AG04449 (cell line): ENCODE measurements at regions of chr20 and their contacts with region 1.

Region 1: GRCh38 chr20:60050158-60050947 is 92.1 kb downstream of the CDH26 start:
- DNase-seq: no peak
- H3K4me3 ChIP-seq: no peak overlapping the region
- CTCF ChIP-seq: no peak

Region 2: DNA sequence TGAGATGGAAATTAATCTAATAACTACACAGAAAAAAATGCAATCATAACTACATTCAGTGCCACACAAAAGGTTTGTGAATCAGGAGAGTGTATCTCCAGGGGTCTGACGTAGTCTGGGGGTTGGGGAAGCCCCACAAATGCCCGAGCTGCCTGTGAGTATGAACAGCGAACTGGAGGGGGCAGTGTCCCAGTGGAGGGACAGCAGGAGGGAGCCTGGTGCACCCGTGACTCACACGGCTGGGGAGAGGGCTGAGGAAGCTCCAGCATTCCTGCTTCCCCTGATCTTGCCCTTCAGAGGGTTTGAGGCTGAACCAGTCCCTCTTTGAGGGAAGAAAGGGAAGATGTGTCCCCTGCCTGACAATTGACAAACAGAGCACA is 13.2 kb before region 1 on chr20:
- CTCF ChIA-PET with region 1: interaction called, 11 read pairs
- POLR2A ChIA-PET with region 1: no interaction called
- DNase-seq: no peak
- H3K4me3 ChIP-seq: no peak overlapping the region
- CTCF ChIP-seq: peak; percentile 66

Region 3: DNA sequence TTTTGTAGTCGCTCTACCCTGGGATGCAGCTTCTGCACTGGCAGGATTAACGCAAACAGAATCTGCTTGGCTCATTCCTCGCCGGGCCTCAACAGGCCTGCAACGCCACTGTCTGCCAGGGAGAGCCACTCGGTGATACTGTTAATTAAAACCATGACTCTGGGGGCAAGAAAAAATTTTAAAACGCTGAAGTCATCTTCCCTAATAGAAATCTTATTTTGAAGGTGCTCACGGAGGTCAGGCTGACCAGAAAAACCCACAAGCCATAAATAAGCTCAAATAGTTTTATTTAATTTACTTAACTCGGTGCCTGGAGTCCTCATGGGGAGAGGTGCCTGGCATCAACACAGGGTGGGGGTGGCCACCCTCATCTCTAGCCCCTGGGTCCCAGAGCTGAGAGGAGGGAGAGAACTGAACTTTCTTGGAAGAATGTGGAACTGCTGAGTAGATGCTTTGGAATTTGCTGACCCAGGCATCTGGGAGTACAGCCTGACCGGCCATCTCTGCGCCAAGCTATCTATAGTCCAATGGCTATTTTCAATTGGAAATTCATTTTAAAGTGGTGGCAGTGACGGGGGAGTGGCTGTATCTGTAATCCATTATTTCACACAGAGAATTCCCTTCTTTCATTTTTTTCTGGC is 12.6 kb after region 1 on chr20:
- CTCF ChIA-PET with region 1: interaction called, 61 read pairs
- POLR2A ChIA-PET with region 1: interaction called, 4 read pairs
- DNase-seq: peak; percentile 76
- H3K4me3 ChIP-seq: peak overlapping the region; percentile 34
- CTCF ChIP-seq: no peak

Region 4: DNA sequence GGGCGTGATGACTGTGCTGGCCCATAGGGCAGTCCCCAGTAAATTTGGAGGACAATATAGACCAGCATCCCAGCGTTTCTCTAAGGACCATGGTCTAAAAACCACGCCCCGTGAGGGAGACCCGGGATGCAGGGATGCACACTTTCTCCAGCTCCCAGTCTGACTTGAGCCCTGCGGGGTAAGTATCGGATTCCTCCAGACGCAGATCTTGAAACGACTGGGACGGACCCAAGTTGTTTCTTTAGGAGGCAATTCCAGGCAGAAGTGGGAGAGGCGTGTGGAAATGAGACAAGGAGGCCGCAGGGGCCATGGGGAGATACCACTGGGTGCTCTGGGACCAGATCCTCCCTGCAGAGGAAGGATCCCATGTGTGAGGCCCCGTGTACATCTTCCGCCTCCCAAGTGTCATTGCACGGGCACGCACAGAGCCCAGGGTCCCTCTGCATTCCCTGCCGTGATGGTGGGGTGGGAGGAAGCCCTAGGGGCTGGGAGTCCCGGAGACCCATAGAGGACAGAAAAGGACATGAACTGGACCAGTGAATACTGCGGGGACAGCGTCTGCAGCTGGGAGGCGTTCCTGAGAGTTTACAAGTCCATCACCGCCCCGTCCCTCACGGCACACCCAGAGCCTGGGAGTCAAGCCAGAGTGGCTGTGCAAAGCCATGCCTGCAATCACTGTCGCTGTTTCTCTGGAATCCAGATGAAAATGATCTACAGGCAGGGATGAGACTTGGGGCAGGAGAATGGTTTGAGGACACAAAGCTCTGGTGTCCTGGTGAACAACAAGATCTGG is 430.8 kb after region 1 on chr20:
- CTCF ChIA-PET with region 1: no interaction called
- POLR2A ChIA-PET with region 1: no interaction called
- DNase-seq: no peak
- H3K4me3 ChIP-seq: no peak overlapping the region
- CTCF ChIP-seq: no peak